Naive thymus-derived CD4-positive, alpha-beta T cell (primary cell): ENCODE measurements at regions of chr17 and their contacts with region 1.

Region 1: DNA sequence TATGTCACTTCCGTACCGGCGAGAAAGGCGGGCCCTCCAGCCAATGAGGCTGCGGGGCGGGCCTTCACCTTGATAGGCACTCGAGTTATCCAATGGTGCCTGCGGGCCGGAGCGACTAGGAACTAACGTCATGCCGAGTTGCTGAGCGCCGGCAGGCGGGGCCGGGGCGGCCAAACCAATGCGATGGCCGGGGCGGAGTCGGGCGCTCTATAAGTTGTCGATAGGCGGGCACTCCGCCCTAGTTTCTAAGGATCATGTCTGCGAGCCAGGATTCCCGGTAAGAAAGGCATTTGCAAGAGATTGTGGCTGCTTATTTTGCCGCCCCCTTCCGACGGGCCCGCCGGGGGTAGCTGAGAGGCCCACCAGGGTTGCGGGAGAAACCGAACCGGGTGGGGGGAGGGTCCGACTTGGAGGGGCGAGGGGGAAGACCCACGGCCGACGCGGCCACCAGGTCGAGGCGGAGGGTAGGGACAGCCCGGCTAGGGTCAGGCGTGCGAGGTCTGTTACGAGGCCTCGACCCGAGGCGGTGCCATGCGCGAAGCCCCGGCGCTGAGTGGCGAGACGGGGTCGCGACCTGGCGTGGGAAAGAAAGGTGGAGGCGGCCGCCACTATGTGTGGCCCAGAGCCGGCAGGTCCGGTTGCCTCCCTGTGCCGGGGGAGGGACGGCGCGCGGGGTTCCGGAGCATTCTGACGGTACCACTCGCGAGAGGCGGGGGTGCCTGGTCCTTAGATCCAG is 6.7 kb upstream of the CD68 start:
- DNase-seq: peak; percentile 99 to 100 (median 100)
- ATAC-seq: peak; percentile 91
- H3K4me3 ChIP-seq: peak overlapping the region; percentile 91
- H3K4me3 Mint-ChIP-seq: peak overlapping the region; percentile 90 to 100 (median 98)
- H3K27ac ChIP-seq: peak overlapping the region; percentile 96
- H3K27ac Mint-ChIP-seq: peak overlapping the region; percentile 94 to 99 (median 98)
- H3K4me1 ChIP-seq: peaks cover 21 to 31% of the 10 kb centered on the region in 2 donors
- H3K4me1 Mint-ChIP-seq: peaks cover 9 to 62% (median 48%) of the 10 kb centered on the region in 7 donors
- H3K27me3 ChIP-seq: no peaks in the 10 kb centered on the region
- H3K27me3 Mint-ChIP-seq: peaks cover 0 to 5% (median 0%) of the 10 kb centered on the region in 5 donors

Region 2: DNA sequence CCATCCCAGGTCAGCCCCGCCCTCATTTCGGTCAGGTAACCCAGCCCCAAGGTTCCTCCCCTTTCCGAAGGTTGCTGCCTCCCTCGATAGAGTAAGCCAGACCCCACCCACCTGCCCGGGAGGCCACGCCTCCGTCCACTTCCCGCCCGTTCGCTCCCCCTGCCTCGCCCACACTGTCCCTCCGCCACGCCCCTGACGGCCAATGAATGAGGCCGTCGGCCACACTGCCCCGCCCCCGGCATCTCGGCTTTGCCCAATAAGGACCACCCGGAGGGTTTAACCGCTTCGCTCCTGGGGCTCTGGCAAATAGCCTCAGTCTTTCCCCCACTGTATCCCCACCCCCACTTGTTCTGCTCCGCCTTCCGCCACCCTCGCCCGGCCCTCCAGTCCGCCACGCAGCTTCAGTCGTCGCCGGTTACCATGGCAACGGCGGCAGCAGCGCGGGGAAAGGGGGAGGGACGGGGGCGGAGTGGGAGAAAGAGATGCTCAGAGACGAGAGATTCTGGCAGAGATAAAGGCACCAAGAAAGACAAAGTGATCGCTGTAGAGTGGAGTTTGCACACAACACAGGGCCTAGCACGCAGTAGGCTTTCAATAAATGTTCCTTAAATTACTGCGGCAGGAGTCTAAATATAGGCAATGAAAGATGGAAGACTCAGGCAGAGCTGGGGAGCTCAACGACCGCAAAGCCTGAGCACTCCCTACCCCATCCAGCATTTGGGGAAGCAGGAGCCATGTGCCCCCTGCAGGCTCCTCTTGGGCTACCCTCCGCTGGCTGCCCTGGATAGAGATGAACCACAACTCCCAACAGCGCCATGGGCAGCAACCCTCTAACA is 358.2 kb before region 1 on chr17:
- CTCF ChIA-PET with region 1: no interaction called
- POLR2A ChIA-PET with region 1: no interaction called
- intact Hi-C with region 1: loop called in 1 of 2 experiments (anchors 2 kb)
- DNase-seq: peak; percentile 96 to 99 (median 97)
- ATAC-seq: peak; percentile 90
- H3K4me3 ChIP-seq: peak overlapping the region; percentile 61
- H3K4me3 Mint-ChIP-seq: peak overlapping the region; percentile 76 to 97 (median 94)
- H3K27ac ChIP-seq: peak overlapping the region; percentile 97
- H3K27ac Mint-ChIP-seq: peak overlapping the region; percentile 90 to 100 (median 99)
- H3K4me1 ChIP-seq: peaks cover 25 to 49% of the 10 kb centered on the region in 2 donors
- H3K4me1 Mint-ChIP-seq: peaks cover 36 to 69% (median 65%) of the 10 kb centered on the region in 7 donors
- H3K27me3 ChIP-seq: no peaks in the 10 kb centered on the region
- H3K27me3 Mint-ChIP-seq: peaks cover 0 to 16% (median 0%) of the 10 kb centered on the region in 5 donors

Region 3: DNA sequence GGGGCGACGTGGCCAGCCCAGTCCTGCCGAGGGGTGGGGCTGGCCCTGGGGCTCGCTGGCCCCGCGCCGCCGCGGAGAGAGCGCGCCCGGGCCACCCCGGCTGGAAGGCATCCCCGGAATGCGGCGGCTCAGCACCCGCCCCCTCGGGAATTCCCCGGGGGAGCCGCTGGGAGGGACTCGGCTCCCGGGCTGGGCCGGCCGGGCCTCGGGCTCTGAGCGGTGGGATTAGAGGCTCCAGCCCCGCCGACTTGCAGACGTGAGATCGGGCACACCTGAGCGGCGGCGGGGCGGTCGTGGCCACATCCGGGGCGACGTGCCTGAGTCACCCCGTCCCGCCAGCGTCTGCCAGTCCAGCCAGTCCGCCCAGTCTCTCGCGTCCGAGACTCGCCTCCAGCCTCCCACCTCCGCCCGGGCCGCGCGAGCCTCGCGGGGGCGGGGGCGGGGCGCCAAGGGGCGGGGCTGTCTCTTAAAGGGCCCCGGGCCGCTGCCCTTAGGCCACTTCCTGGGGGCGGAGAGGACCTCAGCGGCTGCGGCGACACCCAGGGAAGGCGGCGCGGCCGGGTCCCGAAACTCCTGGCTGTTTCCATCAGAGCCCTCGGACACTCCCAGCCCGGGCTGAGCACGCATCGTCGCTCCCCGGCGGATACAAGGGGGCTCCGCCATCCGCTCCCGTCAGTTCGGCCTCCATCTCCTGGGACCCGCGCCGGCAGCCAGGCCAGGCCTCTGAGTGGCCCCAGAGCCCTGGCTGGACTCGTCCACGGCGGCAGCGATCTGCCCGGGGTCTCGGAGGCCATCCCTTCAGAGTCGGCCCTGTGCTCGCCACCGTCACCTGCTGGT is 220.9 kb before region 1 on chr17 and contains the start of gene KCTD11:
- CTCF ChIA-PET with region 1: no interaction called
- POLR2A ChIA-PET with region 1: interaction called, 4 read pairs
- intact Hi-C with region 1: loop called in 1 of 2 experiments (anchors 5 kb)
- DNase-seq: peak; percentile 40 to 88 (median 58)
- ATAC-seq: peak; percentile 72
- H3K4me3 ChIP-seq: peak within 1 kb of the TSS; percentile 57
- H3K4me3 Mint-ChIP-seq: peak within 1 kb of the TSS; percentile 78 to 94 (median 88)
- H3K27ac ChIP-seq: peak within 1 kb of the TSS; percentile 74
- H3K27ac Mint-ChIP-seq: peak within 1 kb of the TSS; percentile 72 to 91 (median 86)
- H3K4me1 ChIP-seq: peaks cover 10 to 27% of the 10 kb centered on the region in 2 donors
- H3K4me1 Mint-ChIP-seq: peaks cover 14 to 62% (median 43%) of the 10 kb centered on the region in 7 donors
- H3K27me3 ChIP-seq: no peaks in the 10 kb centered on the region
- H3K27me3 Mint-ChIP-seq: no peaks in the 10 kb centered on the region
- total RNA-seq, gene KCTD11: 2.7 to 13.7 (median 4.0) TPM

Region 4: DNA sequence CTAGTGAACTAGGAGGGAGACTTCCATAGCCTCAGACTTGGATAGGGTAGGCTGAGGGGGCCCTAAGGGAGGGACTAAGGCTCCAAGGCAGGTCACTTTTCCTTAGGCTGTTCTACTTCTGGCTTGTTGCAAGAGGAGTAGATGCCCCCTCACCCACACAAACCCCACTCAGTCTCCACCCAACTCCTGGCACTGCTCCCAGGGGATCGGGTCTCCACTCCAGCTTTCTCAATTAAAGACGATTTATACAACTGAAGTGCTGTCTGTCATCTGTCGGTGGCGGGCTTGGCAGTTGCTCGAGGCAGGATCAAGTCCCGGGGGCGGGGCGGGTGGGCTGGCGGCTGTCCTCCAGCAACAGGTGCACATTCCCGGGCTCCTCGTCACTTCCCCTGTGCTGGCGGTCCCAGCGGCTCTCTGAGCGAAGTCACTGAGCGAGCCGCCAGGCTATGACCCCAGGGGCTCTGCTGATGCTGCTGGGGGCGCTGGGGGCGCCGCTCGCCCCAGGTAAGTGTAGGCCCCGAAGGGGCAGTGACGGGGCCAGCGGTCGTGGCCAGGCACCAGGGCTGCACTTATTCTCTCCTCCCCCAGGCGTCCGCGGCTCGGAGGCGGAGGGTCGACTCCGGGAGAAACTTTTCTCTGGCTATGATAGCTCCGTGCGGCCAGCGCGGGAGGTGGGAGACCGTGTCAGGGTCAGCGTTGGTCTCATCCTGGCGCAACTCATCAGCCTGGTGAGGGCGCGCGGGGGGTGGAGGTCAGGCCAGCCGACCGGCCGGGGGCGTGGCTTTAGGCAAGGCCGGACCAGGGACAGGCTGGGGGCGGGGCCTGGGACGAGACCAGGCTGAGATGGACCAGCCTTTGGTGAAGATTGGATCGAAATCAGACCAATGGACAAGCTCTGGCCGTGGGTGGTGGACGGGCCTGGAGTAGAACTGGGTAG is 127.8 kb before region 1 on chr17 and contains the start of gene CHRNB1:
- CTCF ChIA-PET with region 1: no interaction called
- POLR2A ChIA-PET with region 1: no interaction called
- intact Hi-C with region 1: no loop called
- DNase-seq: peak in 2 of 9 donors; percentile 23 to 49
- ATAC-seq: peak; percentile 74
- H3K4me3 ChIP-seq: peak within 1 kb of the TSS; percentile 30
- H3K4me3 Mint-ChIP-seq: peak within 1 kb of the TSS; percentile 75 to 89 (median 84)
- H3K27ac ChIP-seq: no peak within 1 kb of the TSS
- H3K27ac Mint-ChIP-seq: peak within 1 kb of the TSS in 5 of 9 donors; percentile 26 to 90 (median 39)
- H3K4me1 ChIP-seq: peaks cover 4 to 28% of the 10 kb centered on the region in 2 donors
- H3K4me1 Mint-ChIP-seq: peaks cover 23 to 39% (median 32%) of the 10 kb centered on the region in 7 donors
- H3K27me3 ChIP-seq: peaks cover 9 to 34% of the 10 kb centered on the region in 2 donors
- H3K27me3 Mint-ChIP-seq: peaks cover 44 to 68% (median 58%) of the 10 kb centered on the region in 5 donors
- total RNA-seq, gene CHRNB1: 6.0 to 14.6 (median 7.2) TPM

Region 5: GRCh38 chr17:7561028-7561575 is 11.7 kb before region 1 on chr17:
- CTCF ChIA-PET with region 1: interaction called, 12 read pairs
- POLR2A ChIA-PET with region 1: interaction called, 29 read pairs
- intact Hi-C with region 1: loop called (anchors 1 kb)
- DNase-seq: peak; percentile 60 to 86 (median 71)
- ATAC-seq: peak; percentile 76
- H3K4me3 ChIP-seq: peak overlapping the region; percentile 96
- H3K4me3 Mint-ChIP-seq: peak overlapping the region; percentile 87 to 97 (median 93)
- H3K27ac ChIP-seq: peak overlapping the region; percentile 92
- H3K27ac Mint-ChIP-seq: peak overlapping the region; percentile 90 to 100 (median 96)
- H3K4me1 ChIP-seq: peaks cover 17 to 54% of the 10 kb centered on the region in 2 donors
- H3K4me1 Mint-ChIP-seq: peaks cover 33 to 55% (median 49%) of the 10 kb centered on the region in 7 donors
- H3K27me3 ChIP-seq: no peaks in the 10 kb centered on the region
- H3K27me3 Mint-ChIP-seq: peaks cover 0 to 2% (median 0%) of the 10 kb centered on the region in 5 donors

Region 6: DNA sequence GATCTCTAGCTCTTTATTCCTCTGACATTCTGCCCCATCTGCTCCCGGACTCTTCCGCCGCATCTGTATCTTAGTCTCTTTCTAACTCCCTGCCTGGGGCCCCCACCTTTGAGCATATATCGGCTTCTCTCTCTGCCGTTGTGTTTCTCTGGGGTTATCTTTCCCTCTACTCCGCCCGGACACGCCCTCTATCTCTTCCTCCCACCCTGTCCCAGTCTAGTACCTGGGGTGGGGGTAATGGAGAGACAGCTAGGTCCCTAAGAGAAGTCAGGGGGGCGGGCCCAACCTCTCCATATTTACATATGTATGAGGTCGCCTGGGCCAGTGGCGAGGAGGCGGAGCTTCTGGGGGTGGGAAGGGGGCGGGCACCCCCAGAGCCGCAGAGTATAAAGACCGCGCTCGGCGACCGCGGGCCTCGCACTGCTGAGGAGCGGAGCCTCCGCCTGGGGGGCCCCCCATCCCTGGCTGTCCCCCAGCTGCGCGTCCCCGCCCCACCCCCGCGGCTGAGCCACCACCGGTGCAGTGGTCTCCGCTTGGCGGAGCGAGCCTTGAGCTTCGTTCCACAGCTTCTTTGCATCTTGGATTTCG is 77.8 kb after region 1 on chr17 and contains the start of gene ATP1B2:
- CTCF ChIA-PET with region 1: no interaction called
- POLR2A ChIA-PET with region 1: interaction called, 5 read pairs
- intact Hi-C with region 1: loop called in 1 of 2 experiments (anchors 2 kb)
- DNase-seq: peak; percentile 44 to 89 (median 66)
- ATAC-seq: peak; percentile 95
- H3K4me3 ChIP-seq: peak within 1 kb of the TSS; percentile 60
- H3K4me3 Mint-ChIP-seq: peak within 1 kb of the TSS; percentile 84 to 94 (median 90)
- H3K27ac ChIP-seq: no peak within 1 kb of the TSS
- H3K27ac Mint-ChIP-seq: peak within 1 kb of the TSS in 5 of 9 donors; percentile 7 to 70 (median 59)
- H3K4me1 ChIP-seq: peaks cover 11 to 21% of the 10 kb centered on the region in 2 donors
- H3K4me1 Mint-ChIP-seq: peaks cover 10 to 21% (median 15%) of the 10 kb centered on the region in 7 donors
- H3K27me3 ChIP-seq: peaks cover 0 to 15% of the 10 kb centered on the region in 2 donors
- H3K27me3 Mint-ChIP-seq: peaks cover 28 to 70% (median 39%) of the 10 kb centered on the region in 5 donors
- total RNA-seq, gene ATP1B2: 0.12 to 1.1 (median 0.29) TPM

Region 7: GRCh38 chr17:7887482-7888183 is 314.9 kb after region 1 on chr17:
- CTCF ChIA-PET with region 1: no interaction called
- POLR2A ChIA-PET with region 1: no interaction called
- intact Hi-C with region 1: loop called in 1 of 2 experiments (anchors 5 kb)
- DNase-seq: peak; percentile 41 to 96 (median 93)
- ATAC-seq: peak; percentile 83
- H3K4me3 ChIP-seq: peak overlapping the region; percentile 61
- H3K4me3 Mint-ChIP-seq: no peak overlapping the region
- H3K27ac ChIP-seq: peak overlapping the region; percentile 91
- H3K27ac Mint-ChIP-seq: no peak overlapping the region
- H3K4me1 ChIP-seq: peaks cover 28 to 29% of the 10 kb centered on the region in 2 donors
- H3K4me1 Mint-ChIP-seq: peaks cover 0 to 17% (median 8%) of the 10 kb centered on the region in 7 donors
- H3K27me3 ChIP-seq: no peaks in the 10 kb centered on the region
- H3K27me3 Mint-ChIP-seq: no peaks in the 10 kb centered on the region

Region 8: GRCh38 chr17:7982666-7983065 is 409.9 kb after region 1 on chr17:
- CTCF ChIA-PET with region 1: no interaction called
- POLR2A ChIA-PET with region 1: no interaction called
- intact Hi-C with region 1: no loop called
- DNase-seq: no peak
- ATAC-seq: no peak
- H3K4me3 ChIP-seq: no peak overlapping the region
- H3K4me3 Mint-ChIP-seq: no peak overlapping the region
- H3K27ac ChIP-seq: no peak overlapping the region
- H3K27ac Mint-ChIP-seq: no peak overlapping the region
- H3K4me1 ChIP-seq: no peaks in the 10 kb centered on the region
- H3K4me1 Mint-ChIP-seq: peaks cover 0 to 3% (median 0%) of the 10 kb centered on the region in 7 donors
- H3K27me3 ChIP-seq: no peaks in the 10 kb centered on the region
- H3K27me3 Mint-ChIP-seq: peaks cover 0 to 24% (median 0%) of the 10 kb centered on the region in 5 donors